ENCODE measurements at regions of chr15 and their contacts with region 1.

Region 1: DNA sequence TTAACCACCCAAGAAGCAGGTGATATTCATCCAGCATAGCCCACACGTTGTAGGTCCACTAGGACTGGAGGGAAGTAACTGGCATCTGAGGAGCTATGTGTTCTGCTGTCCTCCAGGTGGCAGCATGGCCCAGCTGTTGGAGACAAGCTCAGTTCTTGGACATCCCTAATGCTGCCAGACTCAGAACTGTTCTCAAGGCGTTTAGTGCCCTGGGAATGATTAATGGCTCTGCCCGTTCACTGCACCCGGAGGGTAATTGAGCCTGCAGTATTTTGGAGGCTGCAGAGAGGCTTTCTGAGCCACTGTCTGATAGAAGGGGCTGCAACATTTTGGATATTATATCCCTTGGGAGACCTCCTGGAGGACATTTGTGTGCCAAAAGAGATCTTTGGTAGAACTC is 521.2 kb upstream of the SEMA6D start:
- DNase-seq: peak; percentile 64 to 80 (median 67)
- ATAC-seq: peak; percentile 96
- H3K4me3 ChIP-seq: no peak overlapping the region
- H3K4me1 ChIP-seq: no peaks in the 10 kb centered on the region
- CTCF ChIP-seq: peak; percentile 51

Region 2: GRCh38 chr15:47987908-47988532 is 792.0 kb after region 1 on chr15:
- intact Hi-C with region 1: loop called (anchors 5 kb)
- DNase-seq: peak in 1 of 3 donors; percentile 74
- ATAC-seq: peak; percentile 87
- H3K4me3 ChIP-seq: no peak overlapping the region
- H3K4me1 ChIP-seq: no peaks in the 10 kb centered on the region
- CTCF ChIP-seq: peak; percentile 36

Region 3: DNA sequence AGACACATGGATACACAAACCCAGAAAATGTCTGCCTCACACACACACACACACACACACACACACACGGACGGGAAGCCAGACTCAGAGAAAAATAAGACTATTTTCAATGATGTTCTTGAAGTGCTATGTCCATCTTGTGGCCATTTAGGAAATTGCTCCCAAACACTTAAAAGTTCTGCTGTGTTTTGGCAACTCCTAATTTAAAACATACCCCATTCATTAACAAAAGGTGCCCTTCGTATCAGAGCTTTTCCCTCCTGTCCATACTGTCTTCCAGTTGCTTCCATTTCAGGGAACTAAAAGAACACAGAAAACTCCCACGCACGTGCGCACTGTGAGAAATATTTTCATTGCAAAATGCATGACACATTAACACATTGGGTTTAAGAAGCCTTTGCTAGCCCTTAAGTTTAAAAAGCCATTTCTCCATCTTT is 1054.6 kb after region 1 on chr15:
- intact Hi-C with region 1: loop called in 1 of 2 experiments (anchors 10 kb)
- DNase-seq: peak in 1 of 3 donors; percentile 71
- ATAC-seq: peak; percentile 64
- H3K4me3 ChIP-seq: no peak overlapping the region
- H3K4me1 ChIP-seq: no peaks in the 10 kb centered on the region
- CTCF ChIP-seq: no peak